ENCODE measurements at regions of chr10 and their contacts with region 1.

Region 1: GRCh38 chr10:114504769-114505579 is 100.7 kb upstream of the AFAP1L2 start:
- DNase-seq: no peak
- H3K4me3 Mint-ChIP-seq: no peak overlapping the region
- H3K27ac Mint-ChIP-seq: peak overlapping the region; percentile 84
- H3K4me1 Mint-ChIP-seq: peaks cover 18% of the 10 kb centered on the region
- H3K27me3 Mint-ChIP-seq: no peaks in the 10 kb centered on the region
- CTCF ChIP-seq: no peak

Region 2: GRCh38 chr10:114442136-114442535 is 62.8 kb before region 1 on chr10:
- CTCF ChIA-PET with region 1: no interaction called
- intact Hi-C with region 1: no loop called
- DNase-seq: no peak
- H3K4me3 Mint-ChIP-seq: no peak overlapping the region
- H3K27ac Mint-ChIP-seq: no peak overlapping the region
- H3K4me1 Mint-ChIP-seq: no peaks in the 10 kb centered on the region
- H3K27me3 Mint-ChIP-seq: no peaks in the 10 kb centered on the region
- CTCF ChIP-seq: no peak

Region 3: GRCh38 chr10:114482480-114483304 is 22.3 kb before region 1 on chr10:
- CTCF ChIA-PET with region 1: no interaction called
- intact Hi-C with region 1: loop called (anchors 1 kb)
- DNase-seq: no peak
- H3K4me3 Mint-ChIP-seq: no peak overlapping the region
- H3K27ac Mint-ChIP-seq: no peak overlapping the region
- H3K4me1 Mint-ChIP-seq: no peaks in the 10 kb centered on the region
- H3K27me3 Mint-ChIP-seq: no peaks in the 10 kb centered on the region
- CTCF ChIP-seq: no peak

Region 4: GRCh38 chr10:114519284-114519624 is 14.3 kb after region 1 on chr10:
- CTCF ChIA-PET with region 1: interaction called, 3 read pairs
- intact Hi-C with region 1: loop called (anchors 1 kb)
- DNase-seq: peak; percentile 80
- H3K4me3 Mint-ChIP-seq: peak overlapping the region; percentile 18
- H3K27ac Mint-ChIP-seq: peak overlapping the region; percentile 95
- H3K4me1 Mint-ChIP-seq: peaks cover 59% of the 10 kb centered on the region
- H3K27me3 Mint-ChIP-seq: no peaks in the 10 kb centered on the region
- CTCF ChIP-seq: no peak

Region 5: GRCh38 chr10:114550756-114551635 is 46.0 kb after region 1 on chr10:
- CTCF ChIA-PET with region 1: no interaction called
- intact Hi-C with region 1: loop called (anchors 5 kb)
- DNase-seq: no peak
- H3K4me3 Mint-ChIP-seq: no peak overlapping the region
- H3K27ac Mint-ChIP-seq: no peak overlapping the region
- H3K4me1 Mint-ChIP-seq: peaks cover 18% of the 10 kb centered on the region
- H3K27me3 Mint-ChIP-seq: no peaks in the 10 kb centered on the region
- CTCF ChIP-seq: no peak